ENCODE measurements at regions of chr6 and their contacts with region 1.

Region 1: GRCh38 chr6:4155848-4156466 is 20.6 kb upstream of the ECI2 start:
- DNase-seq: peak; percentile 44
- H3K4me3 ChIP-seq: no peak overlapping the region
- CTCF ChIP-seq: peak; percentile 79

Region 2: DNA sequence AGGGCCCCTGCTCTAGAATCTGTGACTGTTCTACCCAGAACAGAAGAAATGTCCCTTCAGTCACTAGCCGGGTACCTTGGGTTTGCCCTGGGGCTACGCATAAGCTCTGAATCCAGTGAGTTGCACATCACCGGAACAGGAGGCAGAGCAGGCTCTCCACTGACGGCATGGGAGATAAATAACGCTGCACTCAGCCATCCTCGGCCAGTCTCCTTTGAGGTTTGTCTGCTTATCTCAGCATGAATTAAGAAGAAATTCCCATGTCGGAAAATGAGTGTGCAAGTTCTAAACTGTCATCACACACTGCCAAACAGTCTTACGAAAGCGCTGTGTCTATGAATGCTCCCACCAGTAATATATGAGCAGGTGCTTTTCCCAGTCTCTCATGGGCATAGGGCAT is 216.0 kb before region 1 on chr6:
- CTCF ChIA-PET with region 1: no interaction called
- POLR2A ChIA-PET with region 1: no interaction called
- DNase-seq: no peak
- H3K4me3 ChIP-seq: no peak overlapping the region
- CTCF ChIP-seq: no peak

Region 3: DNA sequence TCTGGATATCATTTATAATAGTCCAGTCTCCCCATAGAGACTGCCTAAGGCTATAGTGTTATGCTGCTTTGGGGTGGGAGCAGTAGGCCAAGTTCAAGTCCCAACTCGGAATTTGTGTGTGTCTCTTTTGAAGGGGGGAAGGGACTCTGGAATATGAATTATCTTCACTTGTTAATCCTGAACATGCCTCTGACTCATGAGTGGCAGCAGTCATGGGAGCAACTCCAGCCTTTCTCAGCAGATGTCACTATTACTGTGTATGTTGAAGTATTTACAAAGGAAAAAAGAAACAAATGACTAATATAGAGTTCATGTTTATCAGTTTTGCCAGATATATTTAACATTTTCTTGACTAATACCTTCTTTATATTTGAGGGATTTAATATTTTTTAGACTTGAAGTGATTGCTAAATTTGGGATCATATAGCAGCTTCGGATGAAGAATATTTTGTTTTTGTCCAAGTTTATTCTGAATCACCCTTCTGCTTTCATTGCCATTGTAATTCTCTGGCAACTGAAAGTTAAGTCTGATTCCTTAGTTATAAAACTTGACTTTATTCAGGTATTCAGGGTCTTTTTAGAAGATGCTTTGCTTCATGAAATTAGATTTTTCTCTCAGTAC is 100.4 kb before region 1 on chr6:
- CTCF ChIA-PET with region 1: interaction called, 159 read pairs
- POLR2A ChIA-PET with region 1: no interaction called
- DNase-seq: peak; percentile 50
- H3K4me3 ChIP-seq: no peak overlapping the region
- CTCF ChIP-seq: peak; percentile 49

Region 4: DNA sequence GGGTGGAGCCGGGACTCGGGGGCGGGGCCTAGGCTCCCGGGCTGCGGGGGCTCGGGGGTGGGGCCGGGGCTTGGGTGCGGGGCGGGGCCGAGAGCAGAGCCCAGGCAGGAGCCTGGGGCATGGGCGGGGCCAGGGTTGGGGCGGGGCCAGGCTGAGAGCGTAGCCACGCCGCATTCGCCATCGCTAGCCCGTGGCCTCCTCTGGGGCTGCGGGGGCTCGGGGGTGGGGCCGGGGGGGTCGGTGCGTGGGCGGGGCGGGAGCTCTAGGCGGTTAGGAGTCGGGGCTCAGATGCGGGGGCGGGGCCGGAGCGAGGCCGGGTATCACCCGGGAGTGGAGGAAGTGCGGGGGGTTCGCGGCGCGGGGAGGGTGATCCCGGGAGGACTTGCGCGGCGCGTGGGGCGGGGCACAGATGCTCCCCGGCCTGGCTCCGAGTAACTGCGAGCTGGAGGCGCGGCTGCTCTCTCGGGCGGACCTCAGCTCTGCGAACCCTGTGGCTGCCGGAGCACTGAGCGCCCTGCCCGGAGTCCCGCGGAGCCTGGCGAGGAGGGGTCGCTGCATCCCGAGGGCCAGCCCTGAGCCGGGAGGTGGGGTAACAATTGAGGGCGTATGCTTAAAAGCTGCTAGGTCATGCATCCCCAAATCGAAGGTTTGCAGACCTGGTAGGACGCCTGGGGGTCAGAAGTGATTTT is 20.1 kb before region 1 on chr6:
- CTCF ChIA-PET with region 1: interaction called, 39 read pairs
- POLR2A ChIA-PET with region 1: interaction called, 5 read pairs
- DNase-seq: peak; percentile 60
- H3K4me3 ChIP-seq: peak overlapping the region; percentile 73
- CTCF ChIP-seq: no peak

Region 5: GRCh38 chr6:4169028-4169789 is 13.3 kb after region 1 on chr6:
- CTCF ChIA-PET with region 1: interaction called, 15 read pairs
- POLR2A ChIA-PET with region 1: no interaction called
- DNase-seq: no peak
- H3K4me3 ChIP-seq: no peak overlapping the region
- CTCF ChIP-seq: no peak

Region 6: GRCh38 chr6:4210629-4211423 is 54.9 kb after region 1 on chr6:
- CTCF ChIA-PET with region 1: interaction called, 24 read pairs
- POLR2A ChIA-PET with region 1: no interaction called
- DNase-seq: no peak
- H3K4me3 ChIP-seq: no peak overlapping the region
- CTCF ChIP-seq: peak; percentile 74

Measured in AG04449 (cell line).